ENCODE measurements at regions of chr21 and their contacts with region 1.

Region 1: DNA sequence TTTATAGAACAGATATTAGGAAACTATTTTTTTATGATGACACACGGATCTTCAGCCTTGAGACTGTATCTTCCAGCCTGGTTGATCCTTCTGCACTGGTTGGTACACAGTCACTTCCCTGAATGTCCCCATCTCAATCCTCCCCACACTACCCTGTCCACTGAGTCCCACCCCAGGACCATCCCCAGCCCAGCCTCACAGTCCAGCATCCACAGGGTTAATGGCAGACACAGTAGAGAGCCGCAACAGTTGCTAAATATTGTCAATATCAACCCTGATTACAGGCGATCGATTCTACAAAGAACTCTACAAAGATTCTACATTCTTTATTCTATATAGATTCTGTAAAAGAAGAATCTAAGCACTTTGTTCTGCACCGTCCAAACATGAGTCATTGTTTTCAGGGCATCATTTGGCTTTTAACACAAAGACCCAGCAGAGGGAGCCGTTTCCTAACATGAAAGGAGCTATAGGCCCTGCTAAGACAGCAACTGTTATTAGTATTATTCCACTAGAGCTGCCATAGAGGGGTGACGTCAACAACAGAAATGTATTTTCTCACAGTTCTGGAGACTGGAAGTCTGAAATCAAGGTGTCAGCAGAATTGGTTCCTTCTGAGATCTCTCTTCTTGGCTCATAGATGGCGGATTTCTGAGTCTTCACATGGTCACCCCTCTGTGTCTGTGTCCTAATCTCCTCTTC is 30.1 kb upstream of the IFNAR2 start:
- H3K4me3 Mint-ChIP-seq: no peak overlapping the region
- H3K27ac Mint-ChIP-seq: peak overlapping the region; percentile 94
- H3K4me1 Mint-ChIP-seq: peaks cover 70% of the 10 kb centered on the region
- H3K27me3 Mint-ChIP-seq: no peaks in the 10 kb centered on the region

Region 2: GRCh38 chr21:32834916-32835235 is 364.8 kb before region 1 on chr21:
- intact Hi-C with region 1: loop called (anchors 5 kb)
- H3K4me3 Mint-ChIP-seq: no peak overlapping the region
- H3K27ac Mint-ChIP-seq: no peak overlapping the region
- H3K4me1 Mint-ChIP-seq: no peaks in the 10 kb centered on the region
- H3K27me3 Mint-ChIP-seq: peaks cover 7% of the 10 kb centered on the region

Region 3: DNA sequence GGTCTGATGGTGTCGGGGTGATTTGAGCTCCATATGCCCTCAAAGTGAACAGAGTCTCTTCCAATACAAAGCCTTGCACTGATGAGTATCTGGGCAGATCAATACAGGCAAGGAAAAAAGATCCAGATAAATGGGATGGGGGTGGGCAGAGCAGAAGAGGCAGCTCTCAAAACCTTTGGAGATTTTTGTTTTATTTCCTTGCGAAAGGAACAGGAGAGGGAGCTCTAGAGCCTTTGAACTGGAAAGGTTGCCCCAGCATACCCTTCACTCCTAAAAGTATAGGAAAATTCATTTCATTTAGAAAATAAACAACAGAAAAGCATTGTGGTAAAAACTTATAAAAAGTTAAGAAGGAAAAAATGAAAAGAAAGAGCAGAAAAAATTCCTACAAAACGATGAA is 205.4 kb before region 1 on chr21:
- intact Hi-C with region 1: loop called (anchors 2 kb)
- H3K4me3 Mint-ChIP-seq: no peak overlapping the region
- H3K27ac Mint-ChIP-seq: no peak overlapping the region
- H3K4me1 Mint-ChIP-seq: no peaks in the 10 kb centered on the region
- H3K27me3 Mint-ChIP-seq: peaks cover 36% of the 10 kb centered on the region

Region 4: GRCh38 chr21:33185852-33186251 is 13.8 kb before region 1 on chr21:
- intact Hi-C with region 1: no loop called
- H3K4me3 Mint-ChIP-seq: no peak overlapping the region
- H3K27ac Mint-ChIP-seq: no peak overlapping the region
- H3K4me1 Mint-ChIP-seq: no peaks in the 10 kb centered on the region
- H3K27me3 Mint-ChIP-seq: peaks cover 22% of the 10 kb centered on the region

Region 5: DNA sequence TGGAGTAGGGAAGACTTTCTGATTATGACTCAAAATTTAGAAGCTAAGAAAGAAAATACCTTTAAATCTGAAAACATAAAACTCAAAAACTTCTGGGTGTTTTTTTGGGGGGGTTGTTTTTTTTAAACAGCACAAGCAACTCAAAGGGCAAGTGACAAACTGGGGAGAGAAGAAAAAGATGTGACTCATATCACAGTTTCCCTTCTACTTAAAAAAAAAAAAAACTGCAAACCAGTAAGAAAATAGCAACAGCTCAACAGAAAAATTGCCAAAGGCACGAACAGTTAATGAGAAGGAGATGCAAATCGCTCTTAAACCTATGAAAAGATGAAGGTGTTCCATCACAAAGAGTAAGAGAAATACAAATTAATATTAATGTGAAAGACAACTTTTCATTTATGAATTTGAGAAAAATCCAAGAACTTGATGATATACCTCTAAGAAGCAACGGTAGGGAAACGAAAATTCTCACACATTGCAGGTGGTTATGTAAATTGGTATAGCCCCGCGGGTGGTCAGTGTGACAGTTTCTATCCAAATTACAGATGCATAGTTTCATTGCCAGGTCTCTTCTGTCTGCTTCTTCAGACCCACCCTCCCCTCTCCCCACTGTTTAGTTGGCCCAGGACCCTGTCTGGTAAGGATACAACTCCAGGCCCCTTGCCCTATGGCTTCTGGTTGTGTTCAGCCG is 39.0 kb after region 1 on chr21:
- intact Hi-C with region 1: loop called (anchors 5 kb)
- H3K4me3 Mint-ChIP-seq: no peak overlapping the region
- H3K27ac Mint-ChIP-seq: peak overlapping the region; percentile 74
- H3K4me1 Mint-ChIP-seq: peaks cover 72% of the 10 kb centered on the region
- H3K27me3 Mint-ChIP-seq: no peaks in the 10 kb centered on the region

Region 6: GRCh38 chr21:33300701-33301631 is 101.3 kb after region 1 on chr21:
- intact Hi-C with region 1: loop called (anchors 1 kb)
- H3K4me3 Mint-ChIP-seq: peak overlapping the region; percentile 59
- H3K27ac Mint-ChIP-seq: peak overlapping the region; percentile 96
- H3K4me1 Mint-ChIP-seq: peaks cover 91% of the 10 kb centered on the region
- H3K27me3 Mint-ChIP-seq: no peaks in the 10 kb centered on the region

Region 7: DNA sequence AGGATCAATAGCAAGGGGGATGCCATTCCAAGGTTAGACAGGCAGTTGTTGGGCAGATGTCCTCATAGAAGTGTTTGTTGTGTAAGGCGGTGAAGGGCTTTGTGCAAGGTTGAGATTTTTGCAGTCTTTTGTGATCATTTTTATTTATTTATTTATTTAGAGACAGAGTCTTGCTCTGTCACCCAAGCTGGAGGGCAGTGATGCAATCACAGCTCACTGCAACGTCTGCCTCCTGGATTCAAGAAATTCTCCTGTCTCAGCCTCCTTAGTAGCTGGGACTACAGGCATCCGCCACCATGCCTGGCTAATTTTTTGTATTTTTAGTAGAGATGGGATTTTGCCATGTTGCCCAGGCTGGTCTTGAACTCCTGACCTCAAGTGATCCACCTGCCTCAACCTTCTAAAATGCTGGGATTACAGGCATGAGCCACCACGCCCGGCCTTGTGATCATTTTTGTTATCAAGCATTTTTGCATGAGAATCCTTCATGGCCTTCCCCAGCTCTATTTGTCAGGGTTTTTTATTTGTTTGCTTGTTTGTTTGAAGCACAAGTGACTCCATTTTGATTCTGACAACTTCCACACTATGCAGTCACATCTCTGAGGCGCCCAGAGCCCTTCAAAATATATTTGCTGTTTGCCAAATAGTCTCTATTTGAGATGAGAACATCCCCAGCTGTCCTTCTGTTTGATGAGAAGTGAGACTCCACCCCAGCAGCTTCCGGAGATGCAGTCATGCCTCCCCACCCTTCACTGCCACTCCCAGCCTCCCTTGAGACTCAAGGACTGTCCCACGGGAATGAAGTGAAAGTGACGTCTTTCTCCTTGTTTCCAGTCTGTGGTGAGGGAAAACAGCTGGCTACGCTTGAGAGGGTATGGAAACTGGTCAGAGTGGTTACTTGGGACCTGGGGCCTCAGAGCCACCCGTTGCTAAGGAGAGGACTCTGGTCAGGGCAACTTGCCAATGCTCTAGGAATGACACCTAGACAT is 242.1 kb after region 1 on chr21:
- intact Hi-C with region 1: loop called (anchors 2 kb)
- H3K4me3 Mint-ChIP-seq: peak overlapping the region; percentile 26
- H3K27ac Mint-ChIP-seq: peak overlapping the region; percentile 66
- H3K4me1 Mint-ChIP-seq: peaks cover 38% of the 10 kb centered on the region
- H3K27me3 Mint-ChIP-seq: no peaks in the 10 kb centered on the region